Activated CD4-positive, alpha-beta T cell treated with anti-CD3 and anti-CD28 coated beads for 36 hours (primary cell): ENCODE measurements at regions of chr12 and their contacts with region 1.

Region 1: GRCh38 chr12:89856431-89856830 is 147.8 kb upstream of the ATP2B1 start:
- DNase-seq: no peak
- ATAC-seq: peak; percentile 82
- H3K4me3 Mint-ChIP-seq: no peak overlapping the region
- H3K27ac Mint-ChIP-seq: no peak overlapping the region
- H3K4me1 Mint-ChIP-seq: peaks cover 54% of the 10 kb centered on the region
- H3K27me3 Mint-ChIP-seq: no peaks in the 10 kb centered on the region

Region 2: DNA sequence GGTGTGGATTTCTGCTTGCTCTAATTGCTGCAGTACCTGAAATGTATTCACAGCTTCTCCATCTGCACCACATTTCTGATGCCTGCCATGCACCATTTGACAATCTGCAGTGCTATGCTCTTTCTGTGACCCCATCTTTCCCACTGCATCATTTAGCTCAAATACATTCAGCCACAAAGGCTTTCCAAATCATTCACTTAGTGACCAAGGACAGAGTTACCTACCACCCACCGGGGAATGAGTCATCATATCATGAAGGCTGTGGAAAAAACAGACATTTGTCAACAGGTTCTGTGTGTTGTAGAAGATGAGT is 317.7 kb after region 1 on chr12:
- CTCF ChIA-PET with region 1: no interaction called
- POLR2A ChIA-PET with region 1: no interaction called
- intact Hi-C with region 1: no loop called
- DNase-seq: peak; percentile 20
- ATAC-seq: peak; percentile 84
- H3K4me3 Mint-ChIP-seq: no peak overlapping the region
- H3K27ac Mint-ChIP-seq: no peak overlapping the region
- H3K4me1 Mint-ChIP-seq: peaks cover 4% of the 10 kb centered on the region
- H3K27me3 Mint-ChIP-seq: no peaks in the 10 kb centered on the region

Region 3: GRCh38 chr12:90280564-90281058 is 424.2 kb after region 1 on chr12:
- CTCF ChIA-PET with region 1: no interaction called
- POLR2A ChIA-PET with region 1: no interaction called
- intact Hi-C with region 1: loop called in 1 of 2 experiments (anchors 5 kb)
- DNase-seq: peak; percentile 33
- ATAC-seq: peak; percentile 74
- H3K4me3 Mint-ChIP-seq: no peak overlapping the region
- H3K27ac Mint-ChIP-seq: peak overlapping the region; percentile 11
- H3K4me1 Mint-ChIP-seq: peaks cover 28% of the 10 kb centered on the region
- H3K27me3 Mint-ChIP-seq: peaks cover 16% of the 10 kb centered on the region